Naive thymus-derived CD4-positive, alpha-beta T cell (primary cell): ENCODE measurements at regions of chr1 and their contacts with region 1.

Region 1: DNA sequence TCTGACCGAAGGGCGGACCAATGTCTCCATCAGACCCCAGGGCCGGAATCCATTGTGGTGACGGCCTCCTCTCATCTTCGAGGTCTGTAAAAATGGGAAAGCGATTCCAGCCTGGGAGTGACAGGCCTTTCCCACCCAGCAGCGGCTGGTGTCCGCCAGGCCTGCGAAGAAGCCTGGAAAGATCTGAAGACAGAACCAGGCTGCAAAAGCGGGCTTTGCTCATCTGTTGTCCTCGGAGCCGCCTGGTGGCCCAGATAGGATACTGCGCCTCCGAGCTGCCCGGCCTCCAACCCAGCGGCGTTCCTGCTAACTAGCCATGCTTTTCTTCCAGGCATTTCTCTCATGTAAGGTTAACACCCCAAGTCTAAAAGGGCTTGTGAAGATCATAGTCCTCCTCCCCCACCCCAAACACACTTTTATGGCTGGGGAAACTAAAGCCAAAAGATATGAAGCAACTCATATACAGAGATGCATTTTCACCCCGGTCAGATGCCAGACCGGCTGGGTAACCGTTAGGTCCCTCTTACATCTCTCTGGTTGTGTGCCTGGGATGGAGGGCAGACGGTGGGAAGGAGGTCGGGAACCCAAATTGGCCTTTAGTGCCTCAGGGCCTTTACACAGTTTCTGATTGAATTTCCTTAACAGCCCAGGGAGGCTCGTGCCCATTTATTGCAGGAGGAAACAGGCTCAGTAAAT is 1.9 kb upstream of the DHRS3 start:
- DNase-seq: peak; percentile 64 to 83 (median 74)
- ATAC-seq: peak; percentile 69
- H3K4me3 ChIP-seq: peak overlapping the region; percentile 81
- H3K4me3 Mint-ChIP-seq: peak overlapping the region; percentile 90 to 99 (median 99)
- H3K27ac ChIP-seq: peak overlapping the region; percentile 86
- H3K27ac Mint-ChIP-seq: peak overlapping the region; percentile 62 to 98 (median 94)
- H3K4me1 ChIP-seq: peaks cover 22 to 35% of the 10 kb centered on the region in 2 donors
- H3K4me1 Mint-ChIP-seq: peaks cover 27 to 41% (median 38%) of the 10 kb centered on the region in 7 donors
- H3K27me3 ChIP-seq: no peaks in the 10 kb centered on the region
- H3K27me3 Mint-ChIP-seq: peaks cover 0 to 13% (median 0%) of the 10 kb centered on the region in 5 donors

Region 2: GRCh38 chr1:12113433-12114339 is 506.3 kb before region 1 on chr1:
- CTCF ChIA-PET with region 1: no interaction called
- POLR2A ChIA-PET with region 1: no interaction called
- intact Hi-C with region 1: loop called in 1 of 2 experiments (anchors 5 kb)
- DNase-seq: no peak
- ATAC-seq: no peak
- H3K4me3 ChIP-seq: no peak overlapping the region
- H3K4me3 Mint-ChIP-seq: peak overlapping the region in 1 of 10 donors; percentile 7
- H3K27ac ChIP-seq: no peak overlapping the region
- H3K27ac Mint-ChIP-seq: peak overlapping the region in 2 of 9 donors; percentile 30 to 78
- H3K4me1 ChIP-seq: no peaks in the 10 kb centered on the region
- H3K4me1 Mint-ChIP-seq: peaks cover 0 to 27% (median 4%) of the 10 kb centered on the region in 7 donors
- H3K27me3 ChIP-seq: no peaks in the 10 kb centered on the region
- H3K27me3 Mint-ChIP-seq: no peaks in the 10 kb centered on the region

Region 3: GRCh38 chr1:12275369-12275768 is 344.6 kb before region 1 on chr1:
- CTCF ChIA-PET with region 1: interaction called, 5 read pairs
- POLR2A ChIA-PET with region 1: no interaction called
- intact Hi-C with region 1: loop called (anchors 1 kb)
- DNase-seq: peak in 6 of 9 donors; percentile 15 to 43 (median 19)
- ATAC-seq: no peak
- H3K4me3 ChIP-seq: no peak overlapping the region
- H3K4me3 Mint-ChIP-seq: no peak overlapping the region
- H3K27ac ChIP-seq: no peak overlapping the region
- H3K27ac Mint-ChIP-seq: peak overlapping the region in 1 of 9 donors; percentile 45
- H3K4me1 ChIP-seq: no peaks in the 10 kb centered on the region
- H3K4me1 Mint-ChIP-seq: peaks cover 0 to 5% (median 0%) of the 10 kb centered on the region in 7 donors
- H3K27me3 ChIP-seq: no peaks in the 10 kb centered on the region
- H3K27me3 Mint-ChIP-seq: no peaks in the 10 kb centered on the region

Region 4: DNA sequence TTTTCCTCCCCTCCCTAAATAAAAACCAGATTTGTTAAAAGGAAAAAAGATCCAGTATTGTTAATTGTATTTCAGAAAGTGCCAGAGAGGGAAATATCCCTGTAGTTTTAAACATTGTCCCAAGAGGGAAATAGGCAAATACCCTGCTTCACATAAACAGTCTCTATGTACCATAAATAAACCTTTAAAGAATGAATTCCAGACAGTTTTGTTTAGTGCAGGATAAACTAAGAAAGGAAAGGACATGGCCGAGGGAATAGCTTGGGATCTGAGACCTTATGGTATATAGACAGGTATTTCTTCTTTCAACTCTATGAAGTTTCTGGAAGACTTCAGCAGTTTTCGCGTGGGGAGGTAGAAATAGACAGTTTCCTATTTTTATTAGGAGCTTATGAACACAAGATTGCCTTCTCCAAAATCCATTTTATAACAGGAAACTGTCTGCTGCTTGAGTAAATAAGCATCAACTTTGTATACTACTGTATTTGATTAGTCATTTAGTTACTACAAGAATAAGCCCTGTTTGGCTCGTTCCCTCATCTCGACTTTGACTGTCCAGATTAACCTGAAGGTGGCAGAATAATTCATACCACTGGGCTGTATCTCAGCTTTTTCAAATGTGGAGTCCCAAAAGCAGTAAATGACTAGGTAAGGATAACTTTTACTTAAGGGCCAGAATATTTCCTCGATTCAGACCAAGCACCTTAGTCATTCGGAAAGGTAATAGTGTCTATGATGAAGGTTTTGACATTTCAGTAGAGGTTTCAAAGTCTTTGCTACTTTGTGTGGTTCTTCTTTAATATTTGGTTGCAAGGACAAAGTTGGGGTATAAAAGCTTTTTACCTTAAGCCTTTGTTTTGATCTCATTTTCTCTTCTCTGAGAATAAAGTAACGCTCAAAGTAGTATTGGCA is 212.6 kb before region 1 on chr1:
- CTCF ChIA-PET with region 1: interaction called, 24 read pairs
- POLR2A ChIA-PET with region 1: interaction called, 15 read pairs
- intact Hi-C with region 1: loop called in 1 of 2 experiments (anchors 1 kb)
- DNase-seq: peak in 5 of 9 donors; percentile 20 to 45 (median 43)
- ATAC-seq: peak; percentile 49
- H3K4me3 ChIP-seq: no peak overlapping the region
- H3K4me3 Mint-ChIP-seq: no peak overlapping the region
- H3K27ac ChIP-seq: no peak overlapping the region
- H3K27ac Mint-ChIP-seq: peak overlapping the region in 2 of 9 donors; percentile 59 to 61
- H3K4me1 ChIP-seq: peaks cover 0 to 11% of the 10 kb centered on the region in 2 donors
- H3K4me1 Mint-ChIP-seq: peaks cover 10 to 57% (median 47%) of the 10 kb centered on the region in 7 donors
- H3K27me3 ChIP-seq: no peaks in the 10 kb centered on the region
- H3K27me3 Mint-ChIP-seq: no peaks in the 10 kb centered on the region

Region 5: GRCh38 chr1:12454406-12455391 is 165.2 kb before region 1 on chr1:
- CTCF ChIA-PET with region 1: interaction called, 3 read pairs
- POLR2A ChIA-PET with region 1: interaction called, 12 read pairs
- intact Hi-C with region 1: loop called (anchors 1 kb)
- DNase-seq: no peak
- ATAC-seq: no peak
- H3K4me3 ChIP-seq: no peak overlapping the region
- H3K4me3 Mint-ChIP-seq: peak overlapping the region in 9 of 10 donors; percentile 14 to 81 (median 61)
- H3K27ac ChIP-seq: peak overlapping the region; percentile 28
- H3K27ac Mint-ChIP-seq: peak overlapping the region; percentile 11 to 98 (median 91)
- H3K4me1 ChIP-seq: peaks cover 12 to 91% of the 10 kb centered on the region in 2 donors
- H3K4me1 Mint-ChIP-seq: peaks cover 44 to 95% (median 93%) of the 10 kb centered on the region in 7 donors
- H3K27me3 ChIP-seq: no peaks in the 10 kb centered on the region
- H3K27me3 Mint-ChIP-seq: peaks cover 0 to 10% (median 0%) of the 10 kb centered on the region in 5 donors

Region 6: GRCh38 chr1:12596007-12596821 is 23.7 kb before region 1 on chr1:
- CTCF ChIA-PET with region 1: interaction called, 110 read pairs
- POLR2A ChIA-PET with region 1: interaction called, 204 read pairs
- intact Hi-C with region 1: loop called (anchors 1 kb)
- DNase-seq: peak in 1 of 9 donors; percentile 19
- ATAC-seq: peak; percentile 86
- H3K4me3 ChIP-seq: no peak overlapping the region
- H3K4me3 Mint-ChIP-seq: peak overlapping the region in 8 of 10 donors; percentile 43 to 91 (median 73)
- H3K27ac ChIP-seq: no peak overlapping the region
- H3K27ac Mint-ChIP-seq: peak overlapping the region in 1 of 9 donors; percentile 36
- H3K4me1 ChIP-seq: peaks cover 3 to 30% of the 10 kb centered on the region in 2 donors
- H3K4me1 Mint-ChIP-seq: peaks cover 30 to 78% (median 65%) of the 10 kb centered on the region in 7 donors
- H3K27me3 ChIP-seq: no peaks in the 10 kb centered on the region
- H3K27me3 Mint-ChIP-seq: peaks cover 0 to 13% (median 0%) of the 10 kb centered on the region in 5 donors